Activated T-helper 2 cell treated with anti-CD3 and anti-CD28 coated beads, Interferon-gamma antibody, Interleukin-2, Interleukin-4, amounts not matched to agents 10 μg/mL and 5 μg/mL and 100 μg/mL, durations not matched to agents 14 hours and 24 hours and 36 hours (primary cell): ENCODE measurements at regions of chr12 and their contacts with region 1.

Region 1: DNA sequence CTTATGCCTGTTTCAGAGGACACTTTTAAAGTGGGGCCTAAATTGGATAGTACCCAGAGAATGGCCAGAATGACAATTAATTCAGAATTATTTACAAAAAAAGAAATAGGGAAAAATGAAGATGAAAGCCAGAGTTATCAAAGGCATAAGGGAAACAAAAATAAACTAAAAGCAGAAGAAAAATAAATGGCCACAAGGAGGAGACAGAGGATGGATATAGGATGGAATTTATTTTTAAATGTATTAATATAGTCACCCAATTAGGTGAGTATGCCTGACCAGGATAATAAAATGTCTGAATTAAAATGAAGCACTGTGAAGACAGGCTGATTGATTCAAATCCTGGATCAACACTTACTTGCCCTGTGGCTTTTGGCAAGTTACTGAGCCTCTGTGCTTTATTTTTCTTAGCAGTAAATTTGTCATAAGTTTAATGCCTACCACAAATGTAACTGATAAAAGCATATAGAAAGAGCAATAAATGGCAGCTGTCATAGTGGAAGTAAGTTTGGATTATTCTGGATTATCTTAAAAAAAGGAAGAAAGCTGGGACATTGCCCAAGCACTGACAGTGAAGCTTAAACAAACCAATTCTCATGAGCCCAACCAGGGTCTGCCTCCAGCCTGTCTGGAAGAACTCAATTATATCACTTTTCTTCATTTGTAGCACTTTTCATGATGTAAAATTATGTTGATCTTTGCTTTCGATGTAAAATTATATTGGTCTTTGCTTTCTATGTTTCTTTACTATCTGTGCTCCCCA is 3.5 kb downstream of the CLEC9A start:
- DNase-seq: no peak
- H3K4me3 Mint-ChIP-seq: no peak overlapping the region
- H3K27ac Mint-ChIP-seq: no peak overlapping the region
- H3K4me1 Mint-ChIP-seq: no peaks in the 10 kb centered on the region
- H3K27me3 Mint-ChIP-seq: peaks cover 18% of the 10 kb centered on the region

Region 2: GRCh38 chr12:10048526-10048925 is 14.6 kb after region 1 on chr12:
- intact Hi-C with region 1: no loop called
- DNase-seq: no peak
- H3K4me3 Mint-ChIP-seq: no peak overlapping the region
- H3K27ac Mint-ChIP-seq: no peak overlapping the region
- H3K4me1 Mint-ChIP-seq: peaks cover 12% of the 10 kb centered on the region
- H3K27me3 Mint-ChIP-seq: peaks cover 36% of the 10 kb centered on the region

Region 3: DNA sequence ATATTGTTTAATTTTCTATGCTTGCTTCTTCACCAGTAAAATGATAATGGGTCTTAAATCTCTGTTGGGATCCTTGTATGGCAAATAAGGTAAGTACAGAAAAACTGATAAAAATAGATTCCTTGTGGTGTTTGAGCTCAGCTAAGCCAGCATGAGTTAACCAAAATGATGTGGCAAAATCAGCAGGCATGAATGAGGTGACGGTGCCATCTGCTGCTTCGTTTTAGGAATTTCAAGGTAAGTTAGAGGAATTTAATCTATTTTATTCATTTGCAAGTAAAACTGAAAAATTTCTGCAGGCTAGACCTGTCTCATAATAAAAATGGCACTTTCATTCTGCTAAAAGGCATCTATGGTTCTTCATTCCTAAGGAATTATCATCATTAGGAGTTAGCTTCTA is 106.0 kb after region 1 on chr12:
- intact Hi-C with region 1: loop called (anchors 1 kb)
- DNase-seq: peak; percentile 16
- H3K4me3 Mint-ChIP-seq: no peak overlapping the region
- H3K27ac Mint-ChIP-seq: no peak overlapping the region
- H3K4me1 Mint-ChIP-seq: no peaks in the 10 kb centered on the region
- H3K27me3 Mint-ChIP-seq: peaks cover 37% of the 10 kb centered on the region